Aorta (tissue), 5 donors: ENCODE measurements at regions of chr9 and their contacts with region 1.

Region 1: DNA sequence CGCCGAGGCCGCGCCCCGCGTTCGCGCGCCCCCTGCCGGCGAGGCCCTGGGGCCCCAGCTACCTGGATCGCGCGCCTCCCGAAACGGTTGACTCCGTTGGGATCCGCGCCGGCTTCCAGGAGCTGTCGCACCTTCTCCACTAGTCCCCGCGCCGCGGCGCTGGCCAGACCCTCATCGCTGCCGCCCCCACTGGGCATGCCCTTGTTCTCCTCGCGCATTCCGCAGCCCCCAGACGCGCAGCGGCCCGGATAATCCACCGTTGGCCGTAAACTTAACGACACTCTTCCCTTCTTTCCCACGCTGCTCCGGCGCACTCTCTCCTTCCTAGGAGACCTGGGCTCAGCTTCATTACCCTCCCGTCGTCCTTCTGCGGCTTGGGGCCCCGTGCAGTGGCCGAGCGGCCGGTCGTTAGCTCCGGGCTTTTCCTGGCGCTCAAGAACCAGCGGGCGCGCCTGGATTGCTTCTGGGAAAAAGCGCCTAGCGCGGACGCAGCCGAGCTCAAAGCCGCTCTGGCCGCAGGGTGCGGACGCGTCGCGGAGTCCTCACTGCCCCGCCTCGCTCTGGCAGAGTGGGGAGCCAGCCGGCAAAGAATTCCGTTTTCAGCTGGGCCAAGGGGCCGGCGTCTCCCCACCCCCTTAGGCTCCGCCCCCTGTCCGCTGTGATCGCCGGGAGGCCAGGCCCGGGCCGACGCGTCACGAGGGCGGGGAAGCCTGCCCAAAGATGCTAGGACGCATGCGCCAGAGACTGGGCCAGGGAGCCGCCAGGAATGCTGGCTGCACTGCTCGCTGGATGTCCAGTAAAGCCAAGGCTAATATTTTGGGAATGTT is at the start of gene CDKN2B:
- DNase-seq: peak; percentile 98 to 99
- ATAC-seq: peak; percentile 99
- H3K4me3 ChIP-seq: peak within 1 kb of the TSS; percentile 59 to 86
- H3K27ac ChIP-seq: peak within 1 kb of the TSS in 1 of 2 donors; percentile 97
- H3K4me1 ChIP-seq: no peaks in the 10 kb centered on the region
- H3K27me3 ChIP-seq: no peaks in the 10 kb centered on the region
- total RNA-seq, gene CDKN2B: 4.5 to 4.8 TPM

Region 2: DNA sequence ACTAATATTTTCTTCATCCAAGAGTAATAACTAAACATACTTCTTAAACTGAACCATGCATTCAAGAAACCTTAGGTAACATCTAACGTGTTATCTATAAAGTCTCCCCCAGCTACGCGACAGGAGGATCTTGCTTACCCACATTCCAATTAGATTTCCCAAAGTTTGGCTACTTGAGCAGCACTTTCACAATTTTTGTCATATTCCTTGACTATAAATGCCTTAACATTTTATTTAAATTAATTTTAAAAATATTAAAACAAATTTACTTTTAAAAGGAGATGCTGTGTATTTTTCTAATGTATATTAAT is 501.5 kb before region 1 on chr9:
- intact Hi-C with region 1: no loop called
- DNase-seq: no peak
- ATAC-seq: no peak
- H3K4me3 ChIP-seq: no peak overlapping the region
- H3K27ac ChIP-seq: no peak overlapping the region
- H3K4me1 ChIP-seq: no peaks in the 10 kb centered on the region
- H3K27me3 ChIP-seq: no peaks in the 10 kb centered on the region

Region 3: GRCh38 chr9:21802195-21803000 is 206.6 kb before region 1 on chr9 and contains the start of gene MTAP:
- intact Hi-C with region 1: loop called (anchors 2 to 10 kb)
- DNase-seq: peak; percentile 96
- ATAC-seq: peak; percentile 97
- H3K4me3 ChIP-seq: peak within 1 kb of the TSS; percentile 32 to 37
- H3K27ac ChIP-seq: peak within 1 kb of the TSS; percentile 19 to 75
- H3K4me1 ChIP-seq: no peaks in the 10 kb centered on the region
- H3K27me3 ChIP-seq: no peaks in the 10 kb centered on the region
- total RNA-seq, gene MTAP: 28.5 to 41.1 TPM

Region 4: DNA sequence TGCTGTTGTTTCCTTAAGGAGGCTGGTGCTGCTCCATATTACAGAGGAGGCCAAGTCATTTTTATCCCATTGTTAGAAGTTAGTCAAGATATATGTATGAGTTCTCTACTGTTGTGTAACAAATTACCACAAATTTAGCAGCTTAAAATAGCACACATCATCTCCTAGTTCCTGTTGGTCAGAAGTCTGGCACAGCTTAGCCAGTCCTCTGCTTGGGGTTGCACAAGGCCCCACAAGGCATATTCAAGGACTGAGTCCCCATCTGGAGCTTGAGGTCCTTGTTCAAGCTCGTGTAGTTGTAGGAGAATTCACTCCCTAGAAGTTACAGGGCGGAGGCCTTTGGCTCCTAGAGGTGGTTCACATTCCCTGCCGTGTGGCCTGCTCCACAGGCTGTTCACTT is 191.8 kb before region 1 on chr9:
- intact Hi-C with region 1: no loop called
- DNase-seq: no peak
- ATAC-seq: no peak
- H3K4me3 ChIP-seq: no peak overlapping the region
- H3K27ac ChIP-seq: no peak overlapping the region
- H3K4me1 ChIP-seq: no peaks in the 10 kb centered on the region
- H3K27me3 ChIP-seq: no peaks in the 10 kb centered on the region

Region 5: DNA sequence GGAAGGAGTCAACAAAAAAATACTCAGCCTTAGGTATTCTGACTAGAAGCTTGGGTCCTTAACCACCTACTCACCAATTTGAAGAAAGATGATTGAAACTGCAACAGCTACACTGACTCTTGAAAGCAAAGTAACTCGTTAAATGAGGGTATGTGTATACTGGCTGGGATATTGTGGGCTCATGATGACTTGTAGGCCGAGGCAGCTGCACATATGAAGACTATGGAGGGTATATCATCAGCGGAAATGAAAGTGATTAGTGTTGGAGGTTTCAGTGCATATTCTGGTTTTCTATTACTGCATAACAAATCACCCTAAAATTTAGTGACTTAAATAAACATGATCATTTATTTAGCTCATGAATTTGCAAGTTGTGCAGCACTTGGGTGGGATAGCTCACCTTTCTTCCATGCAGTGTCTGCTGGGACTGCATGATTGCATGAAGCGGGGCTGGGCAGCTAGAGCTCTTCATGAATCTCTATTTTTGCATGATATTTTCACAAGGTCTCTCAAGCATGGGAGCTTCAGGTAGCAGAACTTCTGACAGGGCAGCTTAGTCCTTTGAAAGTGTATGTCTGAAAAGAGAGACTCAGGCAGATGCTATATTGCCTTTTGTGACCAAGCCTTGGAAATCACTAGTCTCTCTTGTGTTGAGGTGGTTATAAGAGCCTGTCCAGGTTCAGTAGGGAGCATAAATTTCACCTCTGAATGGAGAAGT is 96.2 kb after region 1 on chr9:
- intact Hi-C with region 1: loop called in 1 of 2 experiments (anchors 5 kb)
- DNase-seq: no peak
- ATAC-seq: no peak
- H3K4me3 ChIP-seq: no peak overlapping the region
- H3K27ac ChIP-seq: no peak overlapping the region
- H3K4me1 ChIP-seq: peaks cover 0 to 3% of the 10 kb centered on the region in 2 donors
- H3K27me3 ChIP-seq: no peaks in the 10 kb centered on the region